Activated B cell treated with CpG ODN at 0.5 μM for 24 hours (primary cell): ENCODE measurements at regions of chr9 and their contacts with region 1.

Region 1: GRCh38 chr9:129139993-129140396 is 28.8 kb downstream of the PTPA start:
- DNase-seq: peak; percentile 77
- ATAC-seq: peak; percentile 83
- H3K4me3 Mint-ChIP-seq: peak overlapping the region; percentile 81
- H3K27ac Mint-ChIP-seq: peak overlapping the region; percentile 91
- H3K4me1 Mint-ChIP-seq: peaks cover 50% of the 10 kb centered on the region
- H3K27me3 Mint-ChIP-seq: no peaks in the 10 kb centered on the region
- CTCF ChIP-seq: no peak

Region 2: DNA sequence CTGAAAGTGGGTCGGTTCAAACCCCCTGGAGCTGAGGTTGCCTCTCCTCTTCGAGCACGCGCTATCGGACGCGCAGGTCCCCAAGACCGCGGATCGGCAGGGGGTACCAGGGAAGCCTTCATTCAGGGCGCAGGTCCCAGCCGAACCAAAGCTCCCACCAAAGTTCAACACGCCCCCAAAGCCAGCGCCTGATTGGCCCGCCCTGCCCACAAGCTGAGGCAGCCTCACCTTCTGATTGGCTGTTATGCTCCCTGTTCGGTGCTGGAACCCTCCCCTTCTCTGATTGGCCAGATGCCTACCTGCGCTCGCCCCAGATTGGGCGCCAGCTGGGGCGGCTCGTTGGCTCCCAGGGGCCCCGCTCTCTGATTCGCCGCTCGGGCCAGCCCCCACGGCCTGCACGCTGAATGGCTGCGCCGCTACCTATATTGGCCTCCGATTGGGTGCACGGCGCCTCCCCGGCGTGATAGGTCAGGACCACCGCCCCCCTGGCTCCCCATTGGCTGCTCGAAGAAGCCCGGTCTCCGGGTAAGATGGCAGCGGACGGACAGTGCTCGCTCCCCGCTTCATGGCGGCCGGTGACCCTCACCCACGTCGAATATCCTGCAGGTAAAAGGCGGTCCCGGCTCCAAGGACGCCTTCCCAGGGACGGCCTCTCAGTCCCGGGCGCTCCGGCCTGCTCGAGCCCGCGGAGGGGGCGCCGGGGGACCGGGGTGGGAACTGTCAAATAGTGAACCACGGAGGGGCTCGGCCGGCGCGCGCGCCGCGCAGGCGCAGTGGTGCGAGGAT is 59.2 kb before region 1 on chr9 and contains the start of gene DOLPP1:
- CTCF ChIA-PET with region 1: no interaction called
- POLR2A ChIA-PET with region 1: interaction called, 6 read pairs
- intact Hi-C with region 1: loop called (anchors 1 kb)
- DNase-seq: peak; percentile 97
- ATAC-seq: peak; percentile 95
- H3K4me3 Mint-ChIP-seq: peak within 1 kb of the TSS; percentile 87
- H3K27ac Mint-ChIP-seq: peak within 1 kb of the TSS; percentile 76
- H3K4me1 Mint-ChIP-seq: peaks cover 29% of the 10 kb centered on the region
- H3K27me3 Mint-ChIP-seq: no peaks in the 10 kb centered on the region
- CTCF ChIP-seq: no peak
- total RNA-seq, gene DOLPP1: 10.9 and 11.3 TPM in 2 replicates

Region 3: GRCh38 chr9:129177791-129178559 is 38.0 kb after region 1 on chr9 and contains the start of gene IER5L:
- CTCF ChIA-PET with region 1: interaction called, 84 read pairs
- POLR2A ChIA-PET with region 1: interaction called, 26 read pairs
- intact Hi-C with region 1: loop called (anchors 1 kb)
- DNase-seq: peak; percentile 94
- ATAC-seq: peak; percentile 90
- H3K4me3 Mint-ChIP-seq: peak within 1 kb of the TSS; percentile 86
- H3K27ac Mint-ChIP-seq: peak within 1 kb of the TSS; percentile 56
- H3K4me1 Mint-ChIP-seq: peaks cover 23% of the 10 kb centered on the region
- H3K27me3 Mint-ChIP-seq: peaks cover 17% of the 10 kb centered on the region
- CTCF ChIP-seq: no peak
- total RNA-seq, gene IER5L: 1.9 and 2.1 TPM in 2 replicates

Region 4: DNA sequence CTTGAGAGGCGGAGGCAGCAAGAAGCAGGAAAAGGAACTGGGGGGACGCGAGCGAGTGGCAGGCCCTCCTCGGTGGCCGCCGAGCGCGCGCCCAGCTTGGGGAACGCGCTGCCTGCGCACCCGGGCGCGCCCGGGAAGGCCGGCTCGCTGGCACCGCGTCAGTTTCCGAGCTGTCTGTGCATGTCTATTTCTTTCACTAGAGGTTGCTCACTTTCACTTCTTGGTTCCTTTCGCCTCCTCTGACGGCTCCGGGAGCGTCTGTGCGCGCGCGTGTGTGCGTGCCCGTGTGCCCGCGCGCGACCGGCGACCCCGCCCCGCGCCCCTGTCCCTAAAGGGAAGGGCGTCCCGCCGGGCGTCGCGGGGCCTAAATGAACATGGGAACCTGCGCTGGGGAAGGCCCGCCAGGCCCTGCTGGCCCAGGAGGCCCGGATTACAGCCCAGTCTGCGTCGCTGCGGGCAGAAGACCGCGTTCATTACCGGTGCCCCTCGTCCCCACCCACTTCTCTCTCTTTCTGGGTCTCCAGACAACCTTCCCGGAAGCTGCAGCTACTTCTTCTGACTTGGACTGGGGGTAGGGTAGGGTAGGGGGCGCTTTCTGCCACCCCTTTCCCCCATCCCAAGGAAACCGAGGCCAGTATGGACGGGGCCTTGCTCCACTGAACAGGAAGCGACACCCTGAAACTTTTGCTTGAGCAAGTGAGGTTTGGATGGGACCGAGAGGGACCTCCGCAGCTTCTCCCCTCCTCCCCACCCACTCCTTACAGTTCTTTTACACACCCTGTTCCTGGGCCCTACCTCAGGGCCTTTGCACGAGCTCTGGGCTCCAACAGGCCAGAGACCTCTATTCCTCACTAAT is 243.8 kb after region 1 on chr9:
- CTCF ChIA-PET with region 1: interaction called, 10 read pairs
- POLR2A ChIA-PET with region 1: interaction called, 27 read pairs
- intact Hi-C with region 1: loop called (anchors 1 kb)
- DNase-seq: peak; percentile 82
- ATAC-seq: peak; percentile 91
- H3K4me3 Mint-ChIP-seq: peak overlapping the region; percentile 80
- H3K27ac Mint-ChIP-seq: peak overlapping the region; percentile 90
- H3K4me1 Mint-ChIP-seq: peaks cover 24% of the 10 kb centered on the region
- H3K27me3 Mint-ChIP-seq: peaks cover 4% of the 10 kb centered on the region
- CTCF ChIP-seq: no peak

Region 5: GRCh38 chr9:129487642-129488409 is 347.8 kb after region 1 on chr9:
- CTCF ChIA-PET with region 1: no interaction called
- POLR2A ChIA-PET with region 1: interaction called, 4 read pairs
- intact Hi-C with region 1: loop called (anchors 2 kb)
- DNase-seq: no peak
- ATAC-seq: peak; percentile 12
- H3K4me3 Mint-ChIP-seq: peak overlapping the region; percentile 81
- H3K27ac Mint-ChIP-seq: peak overlapping the region; percentile 88
- H3K4me1 Mint-ChIP-seq: peaks cover 39% of the 10 kb centered on the region
- H3K27me3 Mint-ChIP-seq: peaks cover 11% of the 10 kb centered on the region
- CTCF ChIP-seq: no peak

Region 6: GRCh38 chr9:129641746-129642513 is 501.9 kb after region 1 on chr9 and contains the start of gene ASB6:
- CTCF ChIA-PET with region 1: interaction called, 3 read pairs
- POLR2A ChIA-PET with region 1: no interaction called
- intact Hi-C with region 1: loop called (anchors 1 kb)
- DNase-seq: peak; percentile 100
- ATAC-seq: peak; percentile 97
- H3K4me3 Mint-ChIP-seq: peak within 1 kb of the TSS; percentile 84
- H3K27ac Mint-ChIP-seq: peak within 1 kb of the TSS; percentile 75
- H3K4me1 Mint-ChIP-seq: peaks cover 19% of the 10 kb centered on the region
- H3K27me3 Mint-ChIP-seq: no peaks in the 10 kb centered on the region
- CTCF ChIP-seq: peak; percentile 93
- total RNA-seq, gene ASB6: 18.9 and 20.1 TPM in 2 replicates

Region 7: GRCh38 chr9:130243015-130243734 is 1103.2 kb after region 1 on chr9:
- CTCF ChIA-PET with region 1: no interaction called
- POLR2A ChIA-PET with region 1: interaction called, 3 read pairs
- intact Hi-C with region 1: loop called (anchors 10 kb)
- DNase-seq: peak; percentile 72
- ATAC-seq: peak; percentile 40
- H3K4me3 Mint-ChIP-seq: peak overlapping the region; percentile 59
- H3K27ac Mint-ChIP-seq: peak overlapping the region; percentile 50
- H3K4me1 Mint-ChIP-seq: peaks cover 32% of the 10 kb centered on the region
- H3K27me3 Mint-ChIP-seq: peaks cover 3% of the 10 kb centered on the region
- CTCF ChIP-seq: peak; percentile 33